OCI-LY7 (cell line): ENCODE measurements at regions of chr15 and their contacts with region 1.

Region 1: DNA sequence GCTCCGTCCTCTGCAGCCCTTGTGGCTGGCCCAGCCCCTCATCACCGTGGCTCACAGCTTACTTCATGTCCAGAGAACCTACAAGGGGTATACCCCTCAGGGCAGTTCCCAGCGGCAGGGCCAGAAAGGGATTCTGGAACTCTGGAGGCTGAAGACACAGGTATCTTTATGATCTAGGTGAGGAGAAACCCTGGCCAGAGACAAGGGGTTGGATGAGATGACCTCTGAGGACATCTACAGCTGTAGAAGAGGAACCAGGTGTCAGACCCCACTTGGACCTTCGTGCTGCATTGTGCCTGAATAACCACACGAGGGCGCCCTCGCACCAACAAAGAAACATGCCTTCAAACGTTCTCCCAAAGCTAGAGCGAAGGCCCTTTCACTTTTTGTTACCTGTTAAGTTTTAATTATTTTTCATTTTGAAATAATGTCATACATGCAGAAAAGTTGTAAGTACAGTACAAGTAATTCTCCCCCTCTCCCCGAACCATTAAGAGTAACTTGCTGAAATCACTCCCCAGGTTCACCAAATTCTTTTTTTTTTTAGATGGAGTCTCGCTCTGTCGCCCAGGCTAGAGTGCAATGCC is 118.7 kb upstream of the SMAD3 start:
- DNase-seq: peak; percentile 76
- H3K4me3 ChIP-seq: no peak overlapping the region
- H3K27ac ChIP-seq: no peak overlapping the region
- H3K4me1 ChIP-seq: peaks cover 19% of the 10 kb centered on the region
- CTCF ChIP-seq: peak; percentile 96

Region 2: DNA sequence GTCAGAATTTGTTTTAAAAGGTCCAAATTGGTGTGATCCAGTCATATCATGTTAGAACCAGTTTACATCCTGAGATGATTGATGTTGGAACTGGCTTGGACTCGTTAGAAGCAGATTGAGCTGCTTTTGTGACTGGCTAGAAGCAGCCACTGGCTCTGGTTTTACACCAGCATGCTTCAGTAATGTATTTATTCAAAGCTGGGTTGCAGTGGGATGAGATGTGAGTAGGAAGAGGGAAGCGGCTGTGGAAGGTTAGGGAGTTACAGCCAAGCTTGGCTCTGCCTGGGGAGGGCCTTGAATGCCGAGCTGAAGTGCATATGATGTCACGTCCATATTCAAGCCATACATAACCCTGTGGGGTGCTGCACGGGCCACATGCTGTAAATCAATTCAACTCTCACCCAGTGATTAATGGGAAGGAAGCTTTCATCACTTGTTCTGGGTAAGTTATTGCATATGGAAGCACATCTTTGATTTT is 14.8 kb after region 1 on chr15:
- CTCF ChIA-PET with region 1: no interaction called
- POLR2A ChIA-PET with region 1: no interaction called
- intact Hi-C with region 1: no loop called
- DNase-seq: no peak
- H3K4me3 ChIP-seq: no peak overlapping the region
- H3K27ac ChIP-seq: no peak overlapping the region
- H3K4me1 ChIP-seq: peaks cover 5% of the 10 kb centered on the region
- CTCF ChIP-seq: no peak

Region 3: GRCh38 chr15:67065444-67066093 is 118.9 kb after region 1 on chr15 and contains the start of gene SMAD3:
- CTCF ChIA-PET with region 1: no interaction called
- POLR2A ChIA-PET with region 1: interaction called, 3 read pairs
- intact Hi-C with region 1: loop called (anchors 5 kb)
- DNase-seq: peak; percentile 92
- H3K4me3 ChIP-seq: peak within 1 kb of the TSS; percentile 100
- H3K27ac ChIP-seq: peak within 1 kb of the TSS; percentile 76
- H3K4me1 ChIP-seq: peaks cover 32% of the 10 kb centered on the region
- CTCF ChIP-seq: no peak
- total RNA-seq, gene SMAD3: 32.8 and 41.2 TPM in 2 replicates

Region 4: DNA sequence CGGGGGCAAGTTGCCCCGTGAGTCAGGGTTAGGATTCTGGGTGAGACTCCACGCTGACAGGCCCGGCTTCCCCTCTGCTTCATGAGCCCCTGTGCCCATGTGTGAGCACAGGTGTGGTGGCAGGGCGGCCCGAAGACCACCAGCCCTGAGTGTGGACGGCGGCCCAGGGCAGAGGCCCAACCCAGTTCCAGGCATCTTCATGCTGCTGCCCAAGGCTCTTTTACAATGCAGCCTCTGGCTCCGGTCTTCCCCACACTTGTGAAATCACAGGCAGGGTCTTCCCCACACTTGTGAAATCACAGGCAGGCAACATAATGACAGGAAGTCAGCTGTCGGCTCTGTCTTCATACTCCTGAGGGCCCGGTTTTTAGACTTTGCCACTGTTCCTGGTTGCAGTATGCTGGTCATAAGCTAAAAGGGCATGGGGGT is 229.0 kb after region 1 on chr15:
- CTCF ChIA-PET with region 1: no interaction called
- POLR2A ChIA-PET with region 1: no interaction called
- intact Hi-C with region 1: loop called (anchors 5 kb)
- DNase-seq: no peak
- H3K4me3 ChIP-seq: no peak overlapping the region
- H3K27ac ChIP-seq: no peak overlapping the region
- H3K4me1 ChIP-seq: peaks cover 14% of the 10 kb centered on the region
- CTCF ChIP-seq: no peak

Region 5: GRCh38 chr15:67196672-67197363 is 250.1 kb after region 1 on chr15:
- CTCF ChIA-PET with region 1: no interaction called
- POLR2A ChIA-PET with region 1: no interaction called
- intact Hi-C with region 1: loop called (anchors 5 kb)
- DNase-seq: no peak
- H3K4me3 ChIP-seq: no peak overlapping the region
- H3K27ac ChIP-seq: no peak overlapping the region
- H3K4me1 ChIP-seq: peaks cover 18% of the 10 kb centered on the region
- CTCF ChIP-seq: no peak

Region 6: DNA sequence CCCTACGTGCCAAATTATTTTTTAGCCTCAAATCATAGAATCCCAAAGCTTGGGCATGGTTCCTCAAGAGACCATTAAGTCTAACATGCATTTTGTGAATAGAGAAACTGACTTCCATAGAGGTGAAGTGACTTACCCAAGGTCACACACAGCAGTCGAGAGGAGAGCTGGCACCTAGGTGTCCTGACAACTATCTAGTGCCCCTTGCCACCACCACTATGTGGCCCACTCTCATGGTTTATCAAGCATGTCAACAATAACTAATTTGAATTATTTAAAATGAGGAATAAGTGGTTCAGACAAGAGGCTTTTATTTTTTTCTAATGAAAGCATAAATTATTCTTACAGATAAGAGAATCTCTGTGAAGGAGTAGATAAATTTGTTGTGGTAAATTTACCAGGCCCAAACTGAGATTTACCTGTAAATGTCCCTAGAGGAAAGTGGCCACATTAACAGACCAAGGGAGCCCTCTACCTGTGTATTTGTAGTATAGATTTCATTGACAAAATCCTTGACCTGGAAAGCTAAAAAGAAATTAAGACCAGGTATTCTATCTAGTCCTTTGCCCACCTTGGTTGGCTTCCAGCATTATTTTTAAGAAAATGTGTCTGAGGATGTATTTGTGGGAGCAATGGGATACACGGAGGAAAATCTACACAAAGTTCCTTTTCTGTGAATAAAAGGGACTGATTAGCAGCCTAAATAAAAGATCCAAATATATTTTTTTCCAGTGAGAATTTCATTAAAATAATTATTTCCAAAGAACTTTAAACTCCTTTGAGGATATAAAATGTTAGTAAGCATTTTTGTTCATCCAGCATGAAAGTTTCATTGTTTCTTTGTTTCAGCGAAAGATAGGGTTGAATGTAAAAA is 357.1 kb after region 1 on chr15:
- CTCF ChIA-PET with region 1: interaction called, 3 read pairs
- POLR2A ChIA-PET with region 1: no interaction called
- intact Hi-C with region 1: loop called (anchors 1 kb)
- DNase-seq: peak; percentile 73
- H3K4me3 ChIP-seq: no peak overlapping the region
- H3K27ac ChIP-seq: no peak overlapping the region
- H3K4me1 ChIP-seq: peaks cover 2% of the 10 kb centered on the region
- CTCF ChIP-seq: peak; percentile 93

Region 7: DNA sequence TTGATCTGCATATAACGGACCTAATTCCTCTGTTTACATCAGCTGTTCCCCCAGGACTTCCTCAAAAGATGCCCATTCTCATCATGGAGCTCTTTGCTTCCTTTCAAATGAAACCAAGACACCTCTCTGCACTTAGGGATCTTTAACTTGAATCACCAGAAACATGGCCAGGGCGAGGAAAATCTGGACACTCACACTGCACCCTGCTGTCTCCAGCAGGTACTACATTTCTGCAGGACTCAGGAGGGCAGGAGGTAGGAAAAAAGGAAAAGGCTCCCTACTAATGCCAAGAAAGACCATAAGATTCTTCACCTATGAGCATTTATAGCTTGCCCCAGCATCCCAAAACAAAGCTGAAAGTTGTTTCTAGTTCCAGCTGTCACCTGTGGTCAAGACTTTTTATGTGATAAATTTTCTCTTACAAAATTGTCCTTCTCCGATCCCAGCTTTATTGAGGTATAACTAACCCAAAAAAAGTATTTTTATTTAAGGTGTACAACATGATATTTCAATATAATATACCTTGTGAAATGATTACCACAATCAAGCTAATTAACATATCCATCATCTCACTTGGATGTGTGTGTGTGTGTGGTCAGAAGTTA is 486.9 kb after region 1 on chr15:
- CTCF ChIA-PET with region 1: no interaction called
- POLR2A ChIA-PET with region 1: no interaction called
- intact Hi-C with region 1: loop called (anchors 1 kb)
- DNase-seq: peak; percentile 43
- H3K4me3 ChIP-seq: no peak overlapping the region
- H3K27ac ChIP-seq: no peak overlapping the region
- H3K4me1 ChIP-seq: no peaks in the 10 kb centered on the region
- CTCF ChIP-seq: peak; percentile 84

Region 8: GRCh38 chr15:67839929-67840748 is 893.5 kb after region 1 on chr15 and contains the start of gene RNU6-1:
- CTCF ChIA-PET with region 1: no interaction called
- POLR2A ChIA-PET with region 1: no interaction called
- intact Hi-C with region 1: loop called (anchors 2 kb)
- DNase-seq: peak; percentile 97
- H3K4me3 ChIP-seq: peak within 1 kb of the TSS; percentile 73
- H3K27ac ChIP-seq: peak within 1 kb of the TSS; percentile 86
- H3K4me1 ChIP-seq: peaks cover 63% of the 10 kb centered on the region
- CTCF ChIP-seq: no peak
- total RNA-seq, gene RNU6-1: not detected in 2 replicates